ENCODE measurements at regions of chr20 and their contacts with region 1.

Region 1: GRCh38 chr20:53915446-53916172 is 154.8 kb downstream of the BCAS1 start:
- DNase-seq: peak; percentile 100
- ATAC-seq: peak; percentile 88
- H3K4me3 ChIP-seq: peak overlapping the region; percentile 72
- H3K27ac ChIP-seq: peak overlapping the region; percentile 84
- H3K4me1 ChIP-seq: peaks cover 48% of the 10 kb centered on the region
- H3K27me3 ChIP-seq: no peaks in the 10 kb centered on the region
- CTCF ChIP-seq: peak; percentile 99

Region 2: DNA sequence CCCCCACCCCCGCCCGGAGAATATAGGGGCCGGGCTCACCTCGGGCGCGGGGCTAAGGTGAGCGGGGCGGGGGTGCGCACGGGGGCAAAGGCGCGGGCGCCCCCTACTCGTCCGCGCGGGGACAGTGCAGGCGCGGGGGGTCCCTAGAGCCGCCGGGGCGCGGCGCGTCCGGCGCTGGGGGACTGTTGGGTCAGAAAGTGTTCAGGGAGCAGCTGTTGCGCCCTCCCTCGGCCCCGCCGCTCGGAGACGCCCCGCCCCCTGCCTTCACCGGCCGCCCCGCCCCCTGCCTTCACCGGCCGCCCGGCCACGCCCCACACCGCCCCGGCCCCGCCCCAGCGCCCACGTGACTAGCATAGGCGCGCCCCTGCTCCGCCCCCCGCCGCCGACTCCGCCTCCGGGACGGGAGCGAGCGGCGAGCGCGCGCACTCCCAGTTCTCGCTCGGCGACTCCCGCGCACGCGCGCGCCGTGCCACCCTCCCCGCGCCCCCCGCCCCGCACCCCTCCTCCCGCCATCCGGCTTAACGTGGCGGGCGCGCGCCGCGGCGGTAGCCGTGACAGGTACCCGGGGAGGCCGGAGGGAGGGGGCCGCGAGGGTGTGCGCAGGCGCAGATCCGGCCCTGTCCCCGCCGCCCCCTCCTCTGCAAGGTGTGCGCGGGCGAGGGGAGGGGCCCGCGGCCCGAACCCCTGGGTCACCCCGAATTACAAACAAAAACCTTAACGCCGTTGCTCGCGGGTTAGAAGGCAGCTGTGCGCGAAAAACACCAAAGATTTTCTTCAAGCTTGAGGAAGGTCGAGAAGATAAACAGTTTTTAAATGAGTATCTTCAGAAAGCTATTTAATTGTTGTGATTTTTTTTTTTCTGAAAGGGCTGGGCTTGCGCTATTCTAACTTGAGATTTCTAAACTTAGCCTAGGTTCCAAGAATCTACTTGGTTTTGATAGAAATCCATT is 321.3 kb before region 1 on chr20:
- CTCF ChIA-PET with region 1: no interaction called
- POLR2A ChIA-PET with region 1: no interaction called
- intact Hi-C with region 1: loop called (anchors 5 kb)
- DNase-seq: peak; percentile 98
- ATAC-seq: peak; percentile 69
- H3K4me3 ChIP-seq: peak overlapping the region; percentile 88
- H3K27ac ChIP-seq: peak overlapping the region; percentile 65
- H3K4me1 ChIP-seq: peaks cover 41% of the 10 kb centered on the region
- H3K27me3 ChIP-seq: no peaks in the 10 kb centered on the region
- CTCF ChIP-seq: no peak

Region 3: DNA sequence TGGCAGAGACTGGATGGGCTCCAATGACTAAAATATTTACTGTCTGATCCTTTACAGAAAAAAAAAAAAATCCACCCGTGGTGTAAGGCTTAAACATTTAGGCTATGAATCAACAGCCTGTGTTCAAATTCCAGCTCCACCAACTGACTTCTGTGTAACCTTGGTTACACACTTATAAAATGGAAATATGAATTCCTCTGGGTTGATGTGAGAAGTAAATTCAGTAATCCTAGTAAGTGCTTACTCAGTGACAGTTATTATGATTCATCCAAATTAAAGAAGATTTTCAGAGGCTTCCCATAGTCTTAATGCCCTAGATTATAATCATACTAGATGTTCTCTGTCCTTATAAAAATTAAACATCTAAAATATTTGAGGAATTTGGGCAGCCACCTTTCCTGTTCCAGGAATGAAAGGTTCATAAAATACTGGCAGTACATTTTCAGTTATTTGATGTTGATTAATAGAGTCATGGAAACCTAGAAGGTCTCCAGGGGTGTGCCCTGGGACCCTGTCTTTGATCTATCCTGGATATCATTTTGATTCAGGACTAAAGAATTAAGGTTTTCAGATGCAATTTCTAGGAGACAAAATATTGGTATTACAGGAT is 141.7 kb before region 1 on chr20:
- CTCF ChIA-PET with region 1: interaction called, 6 read pairs
- POLR2A ChIA-PET with region 1: interaction called, 6 read pairs
- intact Hi-C with region 1: loop called (anchors 1 kb)
- DNase-seq: peak; percentile 100
- ATAC-seq: peak; percentile 75
- H3K4me3 ChIP-seq: peak overlapping the region; percentile 54
- H3K27ac ChIP-seq: peak overlapping the region; percentile 92
- H3K4me1 ChIP-seq: peaks cover 48% of the 10 kb centered on the region
- H3K27me3 ChIP-seq: no peaks in the 10 kb centered on the region
- CTCF ChIP-seq: no peak

Region 4: DNA sequence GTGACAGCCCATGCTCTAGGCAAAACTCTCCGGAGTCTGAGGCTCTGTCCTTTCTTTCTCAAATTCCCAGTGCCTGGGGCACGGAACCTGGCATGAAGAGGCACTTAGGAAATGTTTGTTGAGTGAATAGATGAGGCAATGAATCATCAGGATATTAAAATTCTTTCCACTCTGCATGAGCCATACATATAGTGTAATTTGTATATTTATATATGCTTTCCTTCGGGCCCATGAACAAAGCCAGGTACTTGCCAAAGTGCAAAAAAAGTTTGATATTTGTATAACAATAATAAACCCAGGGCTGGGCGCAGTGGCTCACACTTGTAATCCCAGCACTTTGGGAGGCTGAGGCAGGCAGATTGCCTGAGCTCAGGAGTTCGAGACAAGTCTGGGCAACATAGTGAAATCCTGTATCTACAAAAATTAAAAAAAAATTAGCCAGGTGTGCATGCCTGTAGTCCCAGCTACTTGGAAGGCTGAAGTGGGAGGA is 109.7 kb before region 1 on chr20:
- CTCF ChIA-PET with region 1: no interaction called
- POLR2A ChIA-PET with region 1: no interaction called
- intact Hi-C with region 1: loop called (anchors 1 kb)
- DNase-seq: peak; percentile 100
- ATAC-seq: peak; percentile 82
- H3K4me3 ChIP-seq: no peak overlapping the region
- H3K27ac ChIP-seq: peak overlapping the region; percentile 89
- H3K4me1 ChIP-seq: peaks cover 50% of the 10 kb centered on the region
- H3K27me3 ChIP-seq: no peaks in the 10 kb centered on the region
- CTCF ChIP-seq: no peak

Region 5: DNA sequence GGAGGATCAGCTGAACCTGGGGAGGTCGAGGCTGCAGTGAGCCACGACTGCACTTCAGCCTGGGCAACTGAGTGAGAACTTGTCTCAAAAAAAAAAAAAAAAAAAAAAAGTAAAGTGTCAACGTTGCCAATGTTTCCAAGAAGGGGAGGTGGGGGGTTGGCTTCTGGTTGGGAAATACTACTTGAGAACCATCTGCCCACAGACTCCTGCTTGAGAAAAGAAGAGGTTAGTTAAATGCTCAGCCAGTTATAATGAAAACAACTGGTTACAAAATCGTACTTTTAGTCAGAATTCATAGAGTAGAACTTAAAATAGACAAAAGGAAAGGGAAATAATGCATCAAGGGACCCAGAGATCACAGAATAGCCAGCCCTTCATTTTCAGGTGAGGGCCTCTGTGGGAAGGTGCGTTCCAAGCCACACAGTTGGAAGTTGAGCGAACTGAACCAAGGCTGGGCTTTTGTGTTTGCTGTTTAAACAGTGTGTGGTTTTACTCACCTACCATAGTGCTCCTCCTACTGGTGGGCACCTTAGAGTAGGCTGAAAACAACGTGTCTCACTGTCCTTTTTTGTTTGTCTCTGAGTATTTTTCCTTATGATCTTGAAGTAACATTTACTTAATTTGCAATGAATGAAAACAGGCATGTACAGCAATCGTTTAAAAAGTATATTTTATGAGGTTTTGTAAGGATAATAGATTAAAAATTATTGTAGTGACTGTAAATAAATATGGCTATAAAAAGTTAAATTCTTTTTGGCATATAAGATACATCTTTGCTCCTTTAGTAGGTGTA is 45.9 kb before region 1 on chr20:
- CTCF ChIA-PET with region 1: interaction called, 3 read pairs
- POLR2A ChIA-PET with region 1: no interaction called
- intact Hi-C with region 1: loop called (anchors 1 kb)
- DNase-seq: peak; percentile 98
- ATAC-seq: peak; percentile 71
- H3K4me3 ChIP-seq: peak overlapping the region; percentile 3; the same call in 1 of the 2 replicates
- H3K27ac ChIP-seq: peak overlapping the region; percentile 87
- H3K4me1 ChIP-seq: peaks cover 73% of the 10 kb centered on the region
- H3K27me3 ChIP-seq: no peaks in the 10 kb centered on the region
- CTCF ChIP-seq: peak; percentile 99

Region 6: GRCh38 chr20:53926428-53927028 is 10.9 kb after region 1 on chr20:
- CTCF ChIA-PET with region 1: interaction called, 3 read pairs
- POLR2A ChIA-PET with region 1: interaction called, 8 read pairs
- intact Hi-C with region 1: loop called (anchors 1 kb)
- DNase-seq: peak; percentile 100
- ATAC-seq: peak; percentile 95
- H3K4me3 ChIP-seq: peak overlapping the region; percentile 26; the same call in 1 of the 2 replicates
- H3K27ac ChIP-seq: peak overlapping the region; percentile 88
- H3K4me1 ChIP-seq: peaks cover 46% of the 10 kb centered on the region
- H3K27me3 ChIP-seq: no peaks in the 10 kb centered on the region
- CTCF ChIP-seq: no peak